ENCODE measurements at regions of chr11 and their contacts with region 1.

Region 1: GRCh38 chr11:61384271-61385242 is 7.8 kb upstream of the TMEM216 start:
- DNase-seq: no peak
- H3K4me3 ChIP-seq: no peak overlapping the region
- H3K27ac ChIP-seq: no peak overlapping the region
- H3K4me1 ChIP-seq: peaks cover 0 to 41% (median 3%) of the 10 kb centered on the region in 3 donors
- H3K27me3 ChIP-seq: no peaks in the 10 kb centered on the region
- CTCF ChIP-seq: peak in 2 of 6 experiments; percentile 12 to 31
- POLR2A ChIP-seq: no peak

Region 2: DNA sequence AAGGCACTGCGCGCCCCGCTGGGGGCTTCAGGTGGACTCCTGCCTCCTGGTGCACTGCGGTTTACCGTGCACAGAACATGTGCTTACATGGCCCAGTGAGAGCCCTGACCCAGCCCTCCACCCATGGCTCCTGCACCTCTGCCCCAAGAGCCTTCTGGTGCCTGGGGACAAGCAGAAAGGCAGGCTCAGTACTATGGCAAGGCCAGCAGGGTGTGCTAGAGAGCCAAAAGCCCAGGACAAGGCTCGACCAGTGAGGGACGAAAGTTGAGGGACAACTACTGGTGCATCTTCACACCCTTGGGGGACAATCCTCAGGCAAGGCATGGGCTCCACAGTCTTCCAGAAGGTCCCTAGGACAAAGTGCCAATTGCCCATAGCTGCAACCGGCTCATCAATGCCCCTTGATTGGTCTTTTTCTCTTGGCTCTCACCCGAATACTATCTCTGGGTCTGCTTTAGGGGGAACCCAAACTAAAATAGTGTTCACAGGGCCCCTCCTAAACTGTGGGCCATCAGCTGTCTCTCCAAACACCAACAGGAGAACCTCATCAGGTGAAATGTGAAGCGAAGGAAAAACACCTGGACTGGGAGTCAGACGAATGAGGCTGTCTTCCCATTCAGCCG is 130.0 kb before region 1 on chr11:
- intact Hi-C with region 1: loop called (anchors 10 kb)
- DNase-seq: no peak
- H3K4me3 ChIP-seq: no peak overlapping the region
- H3K27ac ChIP-seq: no peak overlapping the region
- H3K4me1 ChIP-seq: no peaks in the 10 kb centered on the region
- H3K27me3 ChIP-seq: no peaks in the 10 kb centered on the region
- CTCF ChIP-seq: peak; percentile 56 to 90 (median 79)
- POLR2A ChIP-seq: no peak

Region 3: DNA sequence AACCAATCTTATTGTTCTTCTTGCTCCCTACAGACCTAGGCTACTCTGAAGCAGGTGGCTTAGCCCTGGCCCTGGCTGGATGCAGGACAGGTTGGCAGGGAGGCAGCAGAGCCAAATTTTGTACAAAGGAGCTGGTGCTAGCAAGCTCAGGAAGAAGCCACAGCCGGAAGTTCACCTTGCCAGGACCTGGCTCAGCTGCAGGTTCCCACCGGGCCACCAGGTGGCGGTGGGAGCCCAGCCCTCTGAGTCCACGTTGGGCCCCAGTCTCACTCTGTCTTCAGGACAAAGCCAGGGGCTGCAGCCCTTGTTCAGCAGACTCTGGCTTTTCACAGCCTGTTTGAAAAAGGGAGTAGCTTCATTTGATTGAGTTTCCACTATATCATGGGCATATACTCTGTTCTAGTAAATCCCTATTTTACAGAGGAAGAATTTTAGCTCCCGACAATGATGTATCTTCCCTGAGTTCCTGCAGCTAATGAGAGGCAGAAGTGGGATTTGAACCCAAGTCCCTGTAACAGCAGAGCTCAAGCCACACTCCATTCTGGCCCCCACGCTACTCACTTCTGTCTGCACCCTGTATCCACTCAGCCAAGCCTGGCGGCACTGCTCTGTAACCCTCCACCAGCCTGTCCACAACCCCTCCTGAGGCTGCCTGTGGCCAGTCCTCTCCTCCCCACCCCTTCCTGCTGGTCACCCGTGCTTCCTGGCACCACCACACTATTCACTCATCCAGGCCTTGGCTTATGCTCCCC is 48.2 kb before region 1 on chr11:
- intact Hi-C with region 1: loop called (anchors 5 kb)
- DNase-seq: peak; percentile 30
- H3K4me3 ChIP-seq: no peak overlapping the region
- H3K27ac ChIP-seq: peak overlapping the region; percentile 11 to 97 (median 54)
- H3K4me1 ChIP-seq: peaks cover 17 to 46% (median 19%) of the 10 kb centered on the region in 3 donors
- H3K27me3 ChIP-seq: no peaks in the 10 kb centered on the region
- CTCF ChIP-seq: peak; percentile 95 to 99 (median 98)
- POLR2A ChIP-seq: no peak

Region 4: GRCh38 chr11:61429691-61430582 is 45.4 kb after region 1 on chr11 and contains the starts of genes CPSF7 and SDHAF2:
- intact Hi-C with region 1: no loop called
- DNase-seq: peak; percentile 83
- H3K4me3 ChIP-seq: peak within 1 kb of the TSS; percentile 76 to 99 (median 91)
- H3K27ac ChIP-seq: peak within 1 kb of the TSS; percentile 95 to 99 (median 98)
- H3K4me1 ChIP-seq: peaks cover 5 to 64% (median 21%) of the 10 kb centered on the region in 3 donors
- H3K27me3 ChIP-seq: no peaks in the 10 kb centered on the region
- CTCF ChIP-seq: peak in 1 of 6 experiments; percentile 26
- POLR2A ChIP-seq: peak in 2 of 4 donors; percentile 38 to 78
- total RNA-seq, gene CPSF7: 24.4 to 44.1 (median 34.3) TPM
- total RNA-seq, gene SDHAF2: 26.0 to 62.9 (median 43.7) TPM

Region 5: GRCh38 chr11:61695917-61696316 is 311.4 kb after region 1 on chr11:
- intact Hi-C with region 1: no loop called
- DNase-seq: no peak
- H3K4me3 ChIP-seq: peak overlapping the region in 3 of 4 donors; percentile 13 to 48 (median 27)
- H3K27ac ChIP-seq: peak overlapping the region; percentile 83 to 93 (median 89)
- H3K4me1 ChIP-seq: peaks cover 68 to 95% (median 71%) of the 10 kb centered on the region in 3 donors
- H3K27me3 ChIP-seq: no peaks in the 10 kb centered on the region
- CTCF ChIP-seq: peak in 1 of 6 experiments; percentile 19
- POLR2A ChIP-seq: peak in 2 of 4 donors; percentile 10 to 26

Region 6: GRCh38 chr11:61827571-61828378 is 443.2 kb after region 1 on chr11 and contains the start of gene FADS2:
- intact Hi-C with region 1: no loop called
- DNase-seq: peak; percentile 41
- H3K4me3 ChIP-seq: peak within 1 kb of the TSS; percentile 13 to 68 (median 52)
- H3K27ac ChIP-seq: peak within 1 kb of the TSS; percentile 52 to 85 (median 66)
- H3K4me1 ChIP-seq: peaks cover 13 to 52% (median 21%) of the 10 kb centered on the region in 3 donors
- H3K27me3 ChIP-seq: peaks cover 0 to 39% (median 3%) of the 10 kb centered on the region in 4 donors
- CTCF ChIP-seq: no peak
- POLR2A ChIP-seq: peak in 1 of 4 donors; percentile 55
- total RNA-seq, gene FADS2: 2.2 to 13.7 (median 6.8) TPM